CD4-positive, alpha-beta memory T cell (primary cell): ENCODE measurements at regions of chr10 and their contacts with region 1.

Region 1: DNA sequence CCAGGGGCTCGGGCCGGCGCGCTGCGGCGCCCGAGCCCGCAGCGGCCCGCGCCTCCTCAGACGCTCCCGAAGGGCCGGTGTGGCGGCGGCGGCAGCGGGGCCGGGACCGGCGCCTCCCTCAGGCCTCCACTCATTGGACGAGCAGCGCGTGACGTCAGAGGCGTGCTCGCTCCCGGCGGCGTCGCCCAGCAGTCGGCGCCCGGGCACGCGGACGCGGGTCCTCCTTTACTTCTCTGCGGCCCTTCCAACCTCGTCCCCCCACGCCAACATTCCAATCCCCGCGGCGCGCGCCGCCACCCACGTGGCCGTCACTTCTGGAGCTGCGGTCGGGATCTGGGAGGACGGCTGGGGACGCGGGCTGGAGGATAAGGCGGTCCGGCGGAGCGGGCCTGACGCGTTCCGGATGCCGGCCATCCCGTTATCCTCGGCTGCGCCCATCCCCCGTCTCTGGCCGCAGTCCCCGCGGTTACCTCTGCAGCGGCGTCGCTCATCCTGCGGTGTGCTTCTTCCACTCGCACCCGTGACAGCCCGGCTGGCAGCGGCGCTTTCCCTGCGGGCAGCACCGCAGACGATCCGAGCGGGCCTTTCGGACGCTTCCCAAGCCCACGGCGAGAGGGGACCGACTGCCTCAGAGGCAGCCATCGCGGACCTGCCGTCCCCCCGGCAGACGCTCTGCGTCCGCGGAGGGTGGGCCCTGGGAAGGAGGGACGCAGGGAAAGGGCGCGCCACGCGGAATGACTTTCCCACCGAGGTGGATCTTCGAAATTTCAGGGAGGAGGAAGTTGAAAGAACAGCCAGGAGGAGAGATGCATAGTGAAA is at the start of gene PDZD8:
- DNase-seq: peak; percentile 86 to 90 (median 88)
- H3K4me3 ChIP-seq: peak within 1 kb of the TSS; percentile 64 to 98
- H3K4me3 Mint-ChIP-seq: peak within 1 kb of the TSS; percentile 95 to 97 (median 96)
- H3K27ac ChIP-seq: peak within 1 kb of the TSS; percentile 61
- H3K27ac Mint-ChIP-seq: peak within 1 kb of the TSS; percentile 92 to 98 (median 94)
- H3K4me1 ChIP-seq: peaks cover 29% of the 10 kb centered on the region
- H3K4me1 Mint-ChIP-seq: peaks cover 19 to 44% (median 33%) of the 10 kb centered on the region in 4 donors
- H3K27me3 ChIP-seq: peaks cover 3% of the 10 kb centered on the region
- H3K27me3 Mint-ChIP-seq: peaks cover 6 to 19% of the 10 kb centered on the region in 2 donors
- total RNA-seq, gene PDZD8: 13.9 to 15.0 TPM

Region 2: GRCh38 chr10:116721547-116722392 is 653.8 kb before region 1 on chr10:
- CTCF ChIA-PET with region 1: no interaction called
- POLR2A ChIA-PET with region 1: no interaction called
- intact Hi-C with region 1: loop called (anchors 10 kb)
- DNase-seq: no peak
- H3K4me3 ChIP-seq: no peak overlapping the region
- H3K4me3 Mint-ChIP-seq: peak overlapping the region in 3 of 8 donors; percentile 21 to 47 (median 42)
- H3K27ac ChIP-seq: no peak overlapping the region
- H3K27ac Mint-ChIP-seq: no peak overlapping the region
- H3K4me1 ChIP-seq: peaks cover 29% of the 10 kb centered on the region
- H3K4me1 Mint-ChIP-seq: peaks cover 21 to 60% (median 43%) of the 10 kb centered on the region in 4 donors
- H3K27me3 ChIP-seq: peaks cover 48% of the 10 kb centered on the region
- H3K27me3 Mint-ChIP-seq: peaks cover 49 to 56% of the 10 kb centered on the region in 2 donors

Region 3: DNA sequence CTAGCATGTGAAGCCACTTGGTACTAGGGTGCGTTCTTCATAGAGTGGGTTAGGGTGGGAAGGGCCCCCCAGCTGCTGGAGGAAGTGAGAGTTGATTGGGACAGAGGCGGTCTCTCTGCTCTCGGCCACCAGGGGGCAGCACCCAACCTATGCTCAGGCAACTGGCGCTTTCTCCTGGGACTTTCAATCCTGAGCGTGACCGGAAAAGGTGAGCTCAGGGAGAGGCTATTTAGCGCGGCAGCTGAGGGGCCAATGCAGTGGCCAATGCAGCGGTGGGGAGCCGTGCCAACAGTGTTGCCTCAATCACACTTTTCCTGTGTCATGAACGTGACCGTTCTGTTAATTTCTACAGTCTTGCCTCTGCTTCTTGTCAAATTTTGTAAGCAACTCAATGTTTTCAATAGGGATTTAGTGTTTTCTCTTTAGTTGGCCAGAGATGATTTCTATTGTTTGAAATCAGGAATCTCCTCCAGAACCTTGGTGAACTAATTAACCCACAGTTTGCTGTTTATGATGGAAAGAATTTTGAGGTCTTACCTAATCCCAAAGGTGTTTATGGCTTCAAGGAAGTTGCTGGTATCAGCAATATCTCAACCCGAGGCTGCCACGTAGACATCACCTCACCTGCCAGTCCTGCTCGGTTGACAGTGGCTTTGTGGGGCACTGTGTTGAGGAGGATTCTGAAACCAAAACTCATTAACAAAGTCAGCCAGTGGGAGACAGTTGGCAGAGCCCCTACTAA is 67.5 kb after region 1 on chr10:
- CTCF ChIA-PET with region 1: no interaction called
- POLR2A ChIA-PET with region 1: no interaction called
- intact Hi-C with region 1: no loop called
- DNase-seq: peak; percentile 5 to 43 (median 18)
- H3K4me3 ChIP-seq: no peak overlapping the region
- H3K4me3 Mint-ChIP-seq: peak overlapping the region in 3 of 8 donors; percentile 30 to 66 (median 62)
- H3K27ac ChIP-seq: no peak overlapping the region
- H3K27ac Mint-ChIP-seq: no peak overlapping the region
- H3K4me1 ChIP-seq: no peaks in the 10 kb centered on the region
- H3K4me1 Mint-ChIP-seq: peaks cover 0 to 5% (median 0%) of the 10 kb centered on the region in 4 donors
- H3K27me3 ChIP-seq: no peaks in the 10 kb centered on the region
- H3K27me3 Mint-ChIP-seq: peaks cover 15 to 23% of the 10 kb centered on the region in 2 donors

Region 4: GRCh38 chr10:118341791-118342637 is 966.4 kb after region 1 on chr10 and contains the start of gene FAM204A:
- CTCF ChIA-PET with region 1: no interaction called
- POLR2A ChIA-PET with region 1: no interaction called
- intact Hi-C with region 1: loop called (anchors 5 kb)
- DNase-seq: peak; percentile 96 to 99 (median 97)
- H3K4me3 ChIP-seq: peak within 1 kb of the TSS; percentile 88 to 96
- H3K4me3 Mint-ChIP-seq: peak within 1 kb of the TSS; percentile 93 to 100 (median 95)
- H3K27ac ChIP-seq: peak within 1 kb of the TSS; percentile 78
- H3K27ac Mint-ChIP-seq: peak within 1 kb of the TSS; percentile 93 to 99 (median 97)
- H3K4me1 ChIP-seq: peaks cover 46% of the 10 kb centered on the region
- H3K4me1 Mint-ChIP-seq: peaks cover 35 to 64% (median 49%) of the 10 kb centered on the region in 4 donors
- H3K27me3 ChIP-seq: no peaks in the 10 kb centered on the region
- H3K27me3 Mint-ChIP-seq: peaks cover 0 to 2% of the 10 kb centered on the region in 2 donors
- total RNA-seq, gene FAM204A: 64.3 to 65.9 TPM